ENCODE measurements at regions of chr20 and their contacts with region 1.

Region 1: GRCh38 chr20:10864076-10864918 is 190.5 kb upstream of the JAG1 start:
- DNase-seq: peak; percentile 48
- H3K4me3 ChIP-seq: no peak overlapping the region
- H3K27ac ChIP-seq: peak overlapping the region; percentile 59
- H3K4me1 ChIP-seq: peaks cover 32% of the 10 kb centered on the region
- H3K27me3 ChIP-seq: no peaks in the 10 kb centered on the region
- CTCF ChIP-seq: no peak
- POLR2A ChIP-seq: no peak

Region 2: GRCh38 chr20:9458138-9458796 is 1406.0 kb before region 1 on chr20:
- CTCF ChIA-PET with region 1: no interaction called
- POLR2A ChIA-PET with region 1: no interaction called
- dilution Hi-C with region 1: no loop called
- intact Hi-C with region 1: loop called (anchors 5 kb)
- DNase-seq: no peak
- H3K4me3 ChIP-seq: no peak overlapping the region
- H3K27ac ChIP-seq: no peak overlapping the region
- H3K4me1 ChIP-seq: peaks cover 13% of the 10 kb centered on the region
- H3K27me3 ChIP-seq: no peaks in the 10 kb centered on the region
- CTCF ChIP-seq: peak; percentile 22 to 36
- POLR2A ChIP-seq: no peak

Region 3: DNA sequence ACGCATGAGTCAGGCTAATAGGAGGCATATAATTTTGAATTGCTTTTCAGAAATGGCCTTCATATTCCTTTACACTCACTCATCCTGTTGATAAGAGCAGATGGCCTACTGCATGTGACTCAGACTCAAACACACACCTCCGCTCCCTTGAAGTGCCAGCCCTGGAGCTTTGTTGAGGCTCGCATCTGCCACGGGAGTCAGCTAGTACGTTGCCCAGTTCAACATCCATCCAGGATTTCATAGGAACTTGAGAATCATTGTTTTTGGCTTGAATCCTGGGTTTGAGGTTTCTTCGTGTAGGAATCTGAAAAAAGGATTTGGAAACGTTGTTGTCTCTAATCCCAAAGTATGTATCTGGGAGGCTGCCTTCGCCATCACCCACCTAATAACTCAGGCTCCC is 103.1 kb before region 1 on chr20:
- CTCF ChIA-PET with region 1: no interaction called
- POLR2A ChIA-PET with region 1: no interaction called
- dilution Hi-C with region 1: no loop called
- intact Hi-C with region 1: loop called (anchors 2 kb)
- DNase-seq: peak; percentile 93
- H3K4me3 ChIP-seq: no peak overlapping the region
- H3K27ac ChIP-seq: peak overlapping the region; percentile 78
- H3K4me1 ChIP-seq: peaks cover 41% of the 10 kb centered on the region
- H3K27me3 ChIP-seq: no peaks in the 10 kb centered on the region
- CTCF ChIP-seq: no peak
- POLR2A ChIP-seq: peak; percentile 36

Region 4: GRCh38 chr20:10922941-10923340 is 58.6 kb after region 1 on chr20:
- CTCF ChIA-PET with region 1: no interaction called
- POLR2A ChIA-PET with region 1: no interaction called
- dilution Hi-C with region 1: no loop called
- intact Hi-C with region 1: loop called (anchors 5 kb)
- DNase-seq: no peak
- H3K4me3 ChIP-seq: no peak overlapping the region
- H3K27ac ChIP-seq: no peak overlapping the region
- H3K4me1 ChIP-seq: peaks cover 29% of the 10 kb centered on the region
- H3K27me3 ChIP-seq: no peaks in the 10 kb centered on the region
- CTCF ChIP-seq: no peak
- POLR2A ChIP-seq: no peak

Region 5: DNA sequence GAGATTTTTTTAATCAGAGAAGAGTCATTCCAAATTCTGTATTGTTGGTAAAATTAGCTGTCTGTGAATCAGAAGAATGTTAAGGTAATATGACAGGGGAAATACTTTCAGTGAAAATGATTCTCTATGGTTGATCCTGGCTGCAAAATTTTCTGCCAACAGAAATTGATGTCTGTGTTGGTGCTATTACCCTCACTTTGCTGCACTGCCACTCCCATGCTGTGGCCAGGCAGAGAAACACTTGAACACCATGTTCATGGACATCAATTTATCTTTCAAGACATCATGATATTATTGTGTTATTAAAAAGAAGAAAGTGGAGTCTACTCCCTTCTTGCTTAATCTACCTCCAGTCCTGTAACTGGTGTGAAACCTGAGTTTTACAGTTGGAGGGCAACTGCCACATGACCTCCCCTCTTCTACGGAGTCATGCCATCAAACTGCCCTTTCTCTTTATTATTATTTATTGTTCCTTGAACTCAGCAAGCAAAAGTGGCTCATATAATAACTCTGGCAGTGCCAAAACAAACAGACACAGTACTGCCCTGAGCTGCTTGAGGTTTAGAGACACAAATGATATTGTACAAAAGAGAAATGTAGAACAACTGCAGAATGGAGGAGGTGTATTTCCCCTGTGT is 97.5 kb after region 1 on chr20:
- CTCF ChIA-PET with region 1: no interaction called
- POLR2A ChIA-PET with region 1: no interaction called
- dilution Hi-C with region 1: no loop called
- intact Hi-C with region 1: loop called (anchors 5 kb)
- DNase-seq: peak; percentile 75
- H3K4me3 ChIP-seq: no peak overlapping the region
- H3K27ac ChIP-seq: no peak overlapping the region
- H3K4me1 ChIP-seq: peaks cover 36% of the 10 kb centered on the region
- H3K27me3 ChIP-seq: no peaks in the 10 kb centered on the region
- CTCF ChIP-seq: no peak
- POLR2A ChIP-seq: no peak

Measured in endothelial cell of umbilical vein (primary cell).